Caco-2 (cell line): ENCODE measurements at regions of chr7 and their contacts with region 1.

Region 1: DNA sequence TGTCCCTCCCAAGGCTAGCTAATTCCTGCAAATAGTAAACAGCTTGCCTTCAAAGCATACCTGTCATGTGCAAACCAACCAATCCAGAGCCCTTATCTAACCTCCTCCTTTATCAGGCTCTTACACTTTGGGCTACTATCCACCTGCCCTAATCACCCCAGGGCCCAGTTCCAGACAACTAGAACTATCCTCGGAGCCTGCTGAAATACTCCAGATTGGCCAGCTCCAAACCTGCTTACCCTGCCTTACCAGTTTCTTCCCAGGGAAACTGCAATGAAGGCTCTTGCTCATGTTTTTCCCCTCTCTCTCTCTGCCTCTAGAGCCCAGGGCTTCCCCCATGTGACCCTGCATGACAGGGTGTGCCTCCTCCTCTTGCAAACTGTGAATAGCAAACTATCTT is 81.4 kb upstream of the CAPZA2 start:
- DNase-seq: peak; percentile 94 to 95
- H3K4me3 ChIP-seq: no peak overlapping the region
- H3K4me3 Mint-ChIP-seq: peak overlapping the region; percentile 42
- H3K27ac Mint-ChIP-seq: peak overlapping the region; percentile 92
- H3K4me1 ChIP-seq: peaks cover 69% of the 10 kb centered on the region
- H3K4me1 Mint-ChIP-seq: peaks cover 26% of the 10 kb centered on the region
- H3K27me3 ChIP-seq: no peaks in the 10 kb centered on the region
- H3K27me3 Mint-ChIP-seq: no peaks in the 10 kb centered on the region
- CTCF ChIP-seq: no peak

Region 2: DNA sequence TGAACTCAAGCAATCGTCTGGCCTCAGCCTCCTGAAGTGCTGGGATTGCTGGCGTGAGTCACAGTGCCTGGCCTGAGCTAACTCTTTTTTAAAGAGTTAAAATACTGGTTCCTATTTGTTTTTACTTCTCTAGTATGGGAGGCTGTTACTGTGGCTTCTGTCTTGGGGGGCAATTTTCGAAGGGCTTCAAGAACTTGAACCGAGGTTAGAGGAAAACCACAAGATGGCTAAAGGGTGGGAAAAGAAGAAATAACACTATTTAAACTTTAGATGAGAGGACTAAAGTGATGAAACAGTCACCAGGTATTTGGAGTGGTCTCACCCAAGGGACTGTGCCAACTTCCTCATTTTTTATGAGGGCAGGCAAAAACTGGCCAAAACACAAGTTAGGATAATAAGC is 91.2 kb before region 1 on chr7:
- CTCF ChIA-PET with region 1: interaction called, 10 read pairs
- POLR2A ChIA-PET with region 1: no interaction called
- intact Hi-C with region 1: no loop called
- DNase-seq: no peak
- H3K4me3 ChIP-seq: no peak overlapping the region
- H3K4me3 Mint-ChIP-seq: no peak overlapping the region
- H3K27ac Mint-ChIP-seq: no peak overlapping the region
- H3K4me1 ChIP-seq: peaks cover 8% of the 10 kb centered on the region; the same call in 1 of the 2 replicates
- H3K4me1 Mint-ChIP-seq: peaks cover 17% of the 10 kb centered on the region
- H3K27me3 ChIP-seq: no peaks in the 10 kb centered on the region
- H3K27me3 Mint-ChIP-seq: no peaks in the 10 kb centered on the region
- CTCF ChIP-seq: no peak

Region 3: GRCh38 chr7:116726713-116727431 is 54.1 kb before region 1 on chr7:
- CTCF ChIA-PET with region 1: interaction called, 4 read pairs
- POLR2A ChIA-PET with region 1: no interaction called
- intact Hi-C with region 1: loop called (anchors 2 kb)
- DNase-seq: no peak
- H3K4me3 ChIP-seq: no peak overlapping the region
- H3K4me3 Mint-ChIP-seq: peak overlapping the region; percentile 36
- H3K27ac Mint-ChIP-seq: peak overlapping the region; percentile 48
- H3K4me1 ChIP-seq: peaks cover 46% of the 10 kb centered on the region
- H3K4me1 Mint-ChIP-seq: peaks cover 42% of the 10 kb centered on the region
- H3K27me3 ChIP-seq: no peaks in the 10 kb centered on the region
- H3K27me3 Mint-ChIP-seq: no peaks in the 10 kb centered on the region
- CTCF ChIP-seq: no peak

Region 4: DNA sequence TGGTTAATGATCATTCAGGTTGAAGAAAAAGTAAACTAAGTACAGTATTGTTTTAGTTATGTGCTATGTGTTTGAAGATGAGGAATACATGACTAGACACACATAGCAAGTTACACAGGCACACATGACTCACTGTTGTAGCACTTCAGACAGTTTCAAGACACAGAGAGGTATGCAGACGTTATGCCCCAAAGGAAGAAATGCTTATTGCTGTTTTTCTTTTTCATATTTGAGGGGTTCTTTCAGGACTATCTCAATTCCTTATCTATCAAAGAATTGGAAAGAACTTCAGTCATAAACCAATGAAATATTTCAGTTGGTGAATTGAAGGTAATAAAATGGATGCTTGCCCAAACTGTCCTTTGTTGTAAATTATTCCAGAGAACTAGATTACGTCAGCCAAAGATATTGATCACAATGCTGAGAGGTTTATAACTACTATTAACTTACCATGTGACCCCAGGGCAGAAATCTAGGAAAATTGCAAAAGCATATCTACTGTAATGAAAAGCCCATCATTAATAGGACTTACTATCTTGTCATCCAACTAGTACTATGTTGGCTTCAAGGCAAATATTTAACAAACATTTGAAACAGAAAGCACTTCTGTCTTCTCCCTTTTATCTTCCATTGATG is 20.3 kb after region 1 on chr7:
- CTCF ChIA-PET with region 1: no interaction called
- POLR2A ChIA-PET with region 1: no interaction called
- intact Hi-C with region 1: loop called (anchors 1 kb)
- DNase-seq: peak; percentile 51 to 53
- H3K4me3 ChIP-seq: no peak overlapping the region
- H3K4me3 Mint-ChIP-seq: peak overlapping the region; percentile 36
- H3K27ac Mint-ChIP-seq: peak overlapping the region; percentile 88
- H3K4me1 ChIP-seq: peaks cover 63% of the 10 kb centered on the region
- H3K4me1 Mint-ChIP-seq: peaks cover 34% of the 10 kb centered on the region
- H3K27me3 ChIP-seq: no peaks in the 10 kb centered on the region
- H3K27me3 Mint-ChIP-seq: no peaks in the 10 kb centered on the region
- CTCF ChIP-seq: no peak